OCI-LY7 (cell line): ENCODE measurements at regions of chr18 and their contacts with region 1.

Region 1: GRCh38 chr18:60413944-60414547 is 41.5 kb upstream of the MC4R start:
- DNase-seq: peak; percentile 37
- H3K4me3 ChIP-seq: no peak overlapping the region
- H3K27ac ChIP-seq: no peak overlapping the region
- H3K4me1 ChIP-seq: no peaks in the 10 kb centered on the region
- CTCF ChIP-seq: peak; percentile 75

Region 2: GRCh38 chr18:59751186-59751585 is 662.9 kb before region 1 on chr18:
- CTCF ChIA-PET with region 1: no interaction called
- POLR2A ChIA-PET with region 1: no interaction called
- intact Hi-C with region 1: no loop called
- DNase-seq: no peak
- H3K4me3 ChIP-seq: no peak overlapping the region
- H3K27ac ChIP-seq: no peak overlapping the region
- H3K4me1 ChIP-seq: no peaks in the 10 kb centered on the region
- CTCF ChIP-seq: no peak

Region 3: DNA sequence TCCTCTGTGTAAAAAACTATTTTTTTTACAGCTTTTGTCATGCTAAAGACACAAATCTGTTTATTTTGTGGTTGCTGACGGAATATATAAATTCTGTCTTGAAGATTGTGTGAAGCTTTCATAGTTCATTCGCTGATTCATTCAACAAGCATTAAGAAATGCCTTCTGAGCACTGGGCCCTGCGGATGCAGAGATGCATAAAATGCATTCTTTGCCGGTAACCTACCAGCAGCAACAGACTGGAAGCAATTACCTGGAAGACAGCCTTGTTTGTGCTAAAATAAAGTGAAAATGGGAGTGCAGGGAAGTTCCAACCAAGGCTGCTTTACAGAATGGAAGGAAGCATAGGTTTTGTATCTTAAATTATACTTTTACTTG is 394.6 kb before region 1 on chr18:
- CTCF ChIA-PET with region 1: no interaction called
- POLR2A ChIA-PET with region 1: no interaction called
- intact Hi-C with region 1: no loop called
- DNase-seq: no peak
- H3K4me3 ChIP-seq: no peak overlapping the region
- H3K27ac ChIP-seq: no peak overlapping the region
- H3K4me1 ChIP-seq: no peaks in the 10 kb centered on the region
- CTCF ChIP-seq: no peak

Region 4: GRCh38 chr18:60090170-60090569 is 323.9 kb before region 1 on chr18:
- CTCF ChIA-PET with region 1: no interaction called
- POLR2A ChIA-PET with region 1: no interaction called
- intact Hi-C with region 1: loop called (anchors 10 kb)
- DNase-seq: peak; percentile 7
- H3K4me3 ChIP-seq: no peak overlapping the region
- H3K27ac ChIP-seq: no peak overlapping the region
- H3K4me1 ChIP-seq: no peaks in the 10 kb centered on the region
- CTCF ChIP-seq: peak; percentile 37; the same call in 1 of the 2 replicates

Region 5: GRCh38 chr18:61085761-61086160 is 671.7 kb after region 1 on chr18:
- CTCF ChIA-PET with region 1: no interaction called
- POLR2A ChIA-PET with region 1: no interaction called
- intact Hi-C with region 1: no loop called
- DNase-seq: no peak
- H3K4me3 ChIP-seq: no peak overlapping the region
- H3K27ac ChIP-seq: no peak overlapping the region
- H3K4me1 ChIP-seq: no peaks in the 10 kb centered on the region
- CTCF ChIP-seq: no peak